Caco-2 (cell line): ENCODE measurements at regions of chr6 and their contacts with region 1.

Region 1: DNA sequence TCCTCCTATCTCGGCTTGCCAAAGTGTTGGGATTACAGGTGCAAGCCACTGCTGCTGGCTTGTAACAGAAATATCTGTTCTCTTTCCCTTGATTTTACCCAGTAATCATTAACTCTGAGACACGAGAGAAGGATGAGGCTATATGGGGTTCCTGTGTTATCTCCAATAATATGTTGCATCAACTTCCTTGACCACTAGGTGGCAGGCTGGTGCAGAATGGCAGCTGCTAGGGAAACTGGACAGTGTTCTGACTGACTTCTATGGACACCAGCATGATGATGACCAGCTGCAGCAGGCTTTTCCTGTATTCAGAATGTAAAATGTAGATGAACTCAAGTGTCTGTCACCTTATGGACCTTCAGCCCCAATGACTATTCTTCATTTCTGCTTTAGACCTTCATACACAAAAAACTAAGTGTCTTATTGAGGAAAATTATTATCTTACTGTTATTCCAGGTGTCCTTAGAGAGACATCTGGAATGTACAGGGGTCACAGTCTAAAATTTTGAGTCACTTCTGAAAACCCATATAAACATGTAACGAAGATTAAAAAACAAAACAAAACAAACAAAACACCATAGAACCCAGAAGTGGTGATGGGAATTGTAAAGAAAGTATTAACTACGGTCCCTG is 20.4 kb upstream of the CD109 start:
- DNase-seq: peak; percentile 81 to 89
- H3K4me3 ChIP-seq: no peak overlapping the region
- H3K4me3 Mint-ChIP-seq: no peak overlapping the region
- H3K27ac Mint-ChIP-seq: no peak overlapping the region
- H3K4me1 ChIP-seq: no peaks in the 10 kb centered on the region
- H3K4me1 Mint-ChIP-seq: no peaks in the 10 kb centered on the region
- H3K27me3 ChIP-seq: no peaks in the 10 kb centered on the region
- H3K27me3 Mint-ChIP-seq: no peaks in the 10 kb centered on the region
- CTCF ChIP-seq: peak; percentile 86 to 90

Region 2: GRCh38 chr6:73695619-73696421 is 20.2 kb after region 1 on chr6 and contains the start of gene CD109:
- CTCF ChIA-PET with region 1: no interaction called
- POLR2A ChIA-PET with region 1: no interaction called
- intact Hi-C with region 1: loop called (anchors 2 kb)
- DNase-seq: peak in 1 of 2 experiments; percentile 14
- H3K4me3 ChIP-seq: peak within 1 kb of the TSS; percentile 41
- H3K4me3 Mint-ChIP-seq: peak within 1 kb of the TSS; percentile 76
- H3K27ac Mint-ChIP-seq: no peak within 1 kb of the TSS
- H3K4me1 ChIP-seq: no peaks in the 10 kb centered on the region
- H3K4me1 Mint-ChIP-seq: no peaks in the 10 kb centered on the region
- H3K27me3 ChIP-seq: no peaks in the 10 kb centered on the region
- H3K27me3 Mint-ChIP-seq: peaks cover 8% of the 10 kb centered on the region
- CTCF ChIP-seq: no peak
- total RNA-seq, gene CD109: 0.18 and 0.19 TPM in 2 replicates

Region 3: GRCh38 chr6:73732845-73733675 is 57.5 kb after region 1 on chr6:
- CTCF ChIA-PET with region 1: interaction called, 12 read pairs
- POLR2A ChIA-PET with region 1: no interaction called
- intact Hi-C with region 1: loop called (anchors 1 kb)
- DNase-seq: peak; percentile 62 to 72
- H3K4me3 ChIP-seq: no peak overlapping the region
- H3K4me3 Mint-ChIP-seq: no peak overlapping the region
- H3K27ac Mint-ChIP-seq: no peak overlapping the region
- H3K4me1 ChIP-seq: no peaks in the 10 kb centered on the region
- H3K4me1 Mint-ChIP-seq: no peaks in the 10 kb centered on the region
- H3K27me3 ChIP-seq: no peaks in the 10 kb centered on the region
- H3K27me3 Mint-ChIP-seq: peaks cover 3% of the 10 kb centered on the region
- CTCF ChIP-seq: peak; percentile 87 to 92